Endothelial cell of umbilical vein (primary cell): ENCODE measurements at regions of chr11 and their contacts with region 1.

Region 1: DNA sequence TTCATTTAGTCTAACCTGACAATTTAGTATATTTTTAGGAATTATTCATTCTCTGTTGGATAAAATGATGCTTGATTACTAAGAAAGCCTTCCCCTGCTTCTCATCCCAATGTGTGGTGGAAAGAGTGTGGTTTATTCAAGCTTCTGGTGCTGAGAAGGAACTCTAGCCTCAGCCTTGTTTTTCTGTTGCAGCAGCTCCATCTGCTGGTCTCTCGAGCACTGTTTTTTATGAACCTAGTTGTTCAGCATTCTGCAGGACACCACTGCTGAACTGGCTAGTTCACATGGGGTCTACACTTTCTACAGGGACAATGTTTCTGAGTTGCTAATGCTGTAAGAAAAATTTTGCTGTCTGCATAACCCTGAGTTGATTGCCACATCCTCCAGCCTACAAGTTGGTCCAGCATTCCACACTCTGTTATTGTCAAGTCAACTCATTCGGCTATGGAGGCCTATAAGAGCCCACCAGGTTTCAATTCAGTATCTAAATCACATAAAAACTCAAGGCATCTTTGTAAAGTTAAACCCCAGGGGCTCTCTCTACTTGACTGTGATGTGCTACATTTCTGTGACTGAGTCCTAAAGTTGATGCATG is 14.3 kb downstream of the OR2AG2 start:
- DNase-seq: peak; percentile 73
- H3K4me3 ChIP-seq: no peak overlapping the region
- H3K27ac ChIP-seq: no peak overlapping the region
- H3K4me1 ChIP-seq: no peaks in the 10 kb centered on the region
- H3K27me3 ChIP-seq: peaks cover 2 to 8% of the 10 kb centered on the region in 2 experiments
- CTCF ChIP-seq: peak; percentile 58 to 62
- POLR2A ChIP-seq: no peak

Region 2: GRCh38 chr11:6576471-6577373 is 180.7 kb before region 1 on chr11:
- CTCF ChIA-PET with region 1: no interaction called
- POLR2A ChIA-PET with region 1: no interaction called
- dilution Hi-C with region 1: no loop called
- intact Hi-C with region 1: no loop called
- DNase-seq: peak; percentile 84
- H3K4me3 ChIP-seq: peak overlapping the region in 1 of 3 experiments; percentile 0
- H3K27ac ChIP-seq: peak overlapping the region; percentile 69
- H3K4me1 ChIP-seq: peaks cover 32% of the 10 kb centered on the region
- H3K27me3 ChIP-seq: no peaks in the 10 kb centered on the region
- CTCF ChIP-seq: no peak
- POLR2A ChIP-seq: no peak

Region 3: GRCh38 chr11:6603287-6604080 is 154.0 kb before region 1 on chr11 and contains the starts of genes ILK and RRP8:
- CTCF ChIA-PET with region 1: interaction called, 8 read pairs
- POLR2A ChIA-PET with region 1: no interaction called
- dilution Hi-C with region 1: no loop called
- intact Hi-C with region 1: loop called (anchors 2 kb)
- DNase-seq: peak; percentile 93
- H3K4me3 ChIP-seq: peak within 1 kb of the TSS; percentile 62 to 97 (median 90)
- H3K27ac ChIP-seq: peak within 1 kb of the TSS; percentile 83
- H3K4me1 ChIP-seq: peaks cover 44% of the 10 kb centered on the region
- H3K27me3 ChIP-seq: no peaks in the 10 kb centered on the region
- CTCF ChIP-seq: no peak
- POLR2A ChIP-seq: peak; percentile 87
- total RNA-seq, gene ILK: 221 and 233 TPM in 2 replicates
- total RNA-seq, gene RRP8: 19.4 and 23.3 TPM in 2 replicates

Region 4: DNA sequence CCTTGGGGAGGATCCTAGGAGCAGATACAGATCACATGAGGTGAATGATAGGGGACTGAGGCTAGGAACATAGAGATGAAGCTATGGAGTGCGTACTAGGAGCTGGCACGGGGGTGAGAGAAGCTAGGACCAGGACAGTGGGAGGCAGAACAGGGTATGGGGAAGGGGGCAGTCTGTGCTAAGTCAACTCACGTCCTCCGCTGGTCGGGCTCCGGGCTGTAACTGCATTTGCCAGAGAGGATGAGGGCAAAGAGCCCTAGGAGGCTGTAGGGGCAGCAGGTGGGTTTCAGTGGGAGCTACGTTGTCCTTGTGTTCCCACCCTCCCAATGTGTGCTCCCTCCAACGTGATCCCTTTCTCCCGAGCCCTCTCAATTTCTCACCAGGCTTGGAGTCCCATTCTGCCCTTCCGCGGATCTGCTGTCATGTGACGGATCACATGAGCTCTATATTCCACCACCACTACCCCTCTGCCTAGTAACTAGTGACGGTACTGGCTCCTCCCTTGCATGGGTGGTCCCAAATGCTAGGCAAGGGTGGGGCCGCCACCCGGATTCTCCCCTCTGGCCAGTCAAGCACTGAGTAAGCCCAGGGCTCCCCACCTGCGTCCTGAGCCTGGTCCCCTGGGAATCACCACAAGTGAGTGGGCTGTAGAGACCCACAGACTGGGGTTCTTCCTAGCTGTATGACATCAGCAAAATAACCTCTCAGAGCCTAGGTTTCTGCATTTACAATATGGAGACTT is 138.3 kb before region 1 on chr11 and contains the start of gene TPP1:
- CTCF ChIA-PET with region 1: interaction called, 3 read pairs
- POLR2A ChIA-PET with region 1: no interaction called
- dilution Hi-C with region 1: no loop called
- intact Hi-C with region 1: loop called (anchors 5 kb)
- DNase-seq: peak; percentile 97
- H3K4me3 ChIP-seq: peak within 1 kb of the TSS; percentile 26 to 88 (median 87)
- H3K27ac ChIP-seq: peak within 1 kb of the TSS; percentile 68
- H3K4me1 ChIP-seq: peaks cover 33% of the 10 kb centered on the region
- H3K27me3 ChIP-seq: no peaks in the 10 kb centered on the region
- CTCF ChIP-seq: no peak
- POLR2A ChIP-seq: peak; percentile 92
- total RNA-seq, gene TPP1: 101 and 124 TPM in 2 replicates

Region 5: GRCh38 chr11:6719576-6719975 is 37.9 kb before region 1 on chr11:
- CTCF ChIA-PET with region 1: interaction called, 34 read pairs
- POLR2A ChIA-PET with region 1: no interaction called
- dilution Hi-C with region 1: no loop called
- intact Hi-C with region 1: no loop called
- DNase-seq: no peak
- H3K4me3 ChIP-seq: no peak overlapping the region
- H3K27ac ChIP-seq: no peak overlapping the region
- H3K4me1 ChIP-seq: peaks cover 15% of the 10 kb centered on the region
- H3K27me3 ChIP-seq: peaks cover 3 to 10% of the 10 kb centered on the region in 2 experiments
- CTCF ChIP-seq: no peak
- POLR2A ChIP-seq: no peak

Region 6: DNA sequence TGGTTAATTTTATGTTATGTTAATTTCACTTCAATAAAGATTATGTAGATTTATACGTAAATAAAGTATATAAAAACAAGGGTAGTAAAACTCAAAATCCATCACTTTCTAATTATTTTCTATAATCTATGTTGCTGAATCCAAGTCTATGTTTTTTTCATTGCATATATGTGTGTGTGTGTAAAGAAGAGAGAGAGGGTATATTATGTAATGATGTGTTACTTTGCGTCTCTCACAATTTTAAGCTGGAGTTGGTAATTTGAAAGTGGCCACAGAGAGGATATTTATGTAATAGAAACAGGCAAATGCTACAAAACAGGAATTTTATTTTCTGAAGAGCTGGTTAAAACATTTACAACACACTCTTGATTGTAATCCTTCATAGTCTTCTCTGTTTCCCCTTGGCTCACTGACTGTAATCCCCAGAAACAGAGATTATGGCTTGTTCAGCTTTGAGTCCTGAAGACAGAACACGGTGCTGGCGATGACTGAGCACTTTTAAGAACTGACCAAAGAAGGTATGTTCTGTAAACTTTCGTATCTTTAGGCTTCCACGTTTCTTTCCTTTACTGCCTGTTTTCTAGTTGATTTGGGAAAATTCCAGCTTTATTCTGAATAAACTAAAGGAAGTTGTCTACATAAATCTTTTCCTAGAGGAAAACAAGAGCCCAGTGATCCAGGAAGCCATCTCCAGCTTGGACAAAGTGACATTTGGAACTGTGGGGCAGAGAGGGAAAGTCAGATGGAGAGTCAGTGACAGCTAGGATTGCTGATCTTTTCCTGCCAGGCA is 29.3 kb before region 1 on chr11:
- CTCF ChIA-PET with region 1: interaction called, 391 read pairs
- POLR2A ChIA-PET with region 1: no interaction called
- dilution Hi-C with region 1: no loop called
- intact Hi-C with region 1: no loop called
- DNase-seq: peak; percentile 56
- H3K4me3 ChIP-seq: peak overlapping the region in 1 of 3 experiments; percentile 43
- H3K27ac ChIP-seq: no peak overlapping the region
- H3K4me1 ChIP-seq: peaks cover 20% of the 10 kb centered on the region
- H3K27me3 ChIP-seq: peaks cover 0 to 4% of the 10 kb centered on the region in 2 experiments
- CTCF ChIP-seq: no peak
- POLR2A ChIP-seq: no peak

Region 7: GRCh38 chr11:6737872-6738466 is 19.5 kb before region 1 on chr11:
- CTCF ChIA-PET with region 1: interaction called, 391 read pairs
- POLR2A ChIA-PET with region 1: no interaction called
- dilution Hi-C with region 1: no loop called
- intact Hi-C with region 1: loop called (anchors 1 kb)
- DNase-seq: peak; percentile 64
- H3K4me3 ChIP-seq: no peak overlapping the region
- H3K27ac ChIP-seq: no peak overlapping the region
- H3K4me1 ChIP-seq: peaks cover 12% of the 10 kb centered on the region
- H3K27me3 ChIP-seq: peaks cover 0 to 3% of the 10 kb centered on the region in 2 experiments
- CTCF ChIP-seq: peak; percentile 53 to 66
- POLR2A ChIP-seq: no peak

Region 8: DNA sequence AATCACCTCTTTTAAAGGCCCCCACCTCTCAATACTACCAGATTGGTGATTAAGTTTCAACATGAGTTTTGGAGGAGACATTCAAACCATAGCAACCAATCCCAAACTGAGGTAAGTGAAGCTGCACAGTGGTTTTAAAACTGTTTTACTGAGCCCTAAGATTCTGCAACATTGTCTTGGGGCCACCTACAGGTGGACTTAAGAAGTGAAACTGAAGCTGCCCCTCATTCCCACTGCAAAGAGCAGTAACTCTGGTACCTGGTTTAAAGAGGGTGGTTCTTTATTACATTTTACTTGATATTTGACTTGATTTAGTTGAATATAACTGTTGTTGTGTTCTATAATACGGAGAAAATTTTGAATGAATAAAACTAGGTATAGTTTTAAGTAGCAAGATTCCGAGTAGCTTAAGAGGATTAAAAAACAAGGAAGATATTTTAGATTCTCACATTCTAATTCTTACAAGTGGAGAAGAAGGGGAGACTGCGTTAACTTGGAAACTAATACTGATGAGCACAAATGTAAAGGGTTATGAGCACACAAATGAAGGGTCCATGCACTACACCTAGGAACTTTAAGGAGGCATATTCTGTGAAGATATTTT is 520.9 kb after region 1 on chr11:
- CTCF ChIA-PET with region 1: interaction called, 19 read pairs
- POLR2A ChIA-PET with region 1: no interaction called
- dilution Hi-C with region 1: no loop called
- intact Hi-C with region 1: no loop called
- DNase-seq: peak; percentile 42
- H3K4me3 ChIP-seq: no peak overlapping the region
- H3K27ac ChIP-seq: no peak overlapping the region
- H3K4me1 ChIP-seq: no peaks in the 10 kb centered on the region
- H3K27me3 ChIP-seq: no peaks in the 10 kb centered on the region
- CTCF ChIP-seq: peak; percentile 46 to 64
- POLR2A ChIP-seq: no peak